ENCODE measurements at regions of chr12 and their contacts with region 1.

Region 1: GRCh38 chr12:43835656-43836474 is at the start of gene TMEM117:
- DNase-seq: peak; percentile 52
- ATAC-seq: peak; percentile 76
- H3K4me3 ChIP-seq: peak within 1 kb of the TSS; percentile 83
- H3K27ac ChIP-seq: peak within 1 kb of the TSS; percentile 41
- H3K4me1 ChIP-seq: peaks cover 8% of the 10 kb centered on the region; the same call in 1 of the 2 replicates
- H3K27me3 ChIP-seq: no peaks in the 10 kb centered on the region
- CTCF ChIP-seq: no peak
- total RNA-seq, gene TMEM117: 7.9 and 9.0 TPM in 2 replicates

Region 2: DNA sequence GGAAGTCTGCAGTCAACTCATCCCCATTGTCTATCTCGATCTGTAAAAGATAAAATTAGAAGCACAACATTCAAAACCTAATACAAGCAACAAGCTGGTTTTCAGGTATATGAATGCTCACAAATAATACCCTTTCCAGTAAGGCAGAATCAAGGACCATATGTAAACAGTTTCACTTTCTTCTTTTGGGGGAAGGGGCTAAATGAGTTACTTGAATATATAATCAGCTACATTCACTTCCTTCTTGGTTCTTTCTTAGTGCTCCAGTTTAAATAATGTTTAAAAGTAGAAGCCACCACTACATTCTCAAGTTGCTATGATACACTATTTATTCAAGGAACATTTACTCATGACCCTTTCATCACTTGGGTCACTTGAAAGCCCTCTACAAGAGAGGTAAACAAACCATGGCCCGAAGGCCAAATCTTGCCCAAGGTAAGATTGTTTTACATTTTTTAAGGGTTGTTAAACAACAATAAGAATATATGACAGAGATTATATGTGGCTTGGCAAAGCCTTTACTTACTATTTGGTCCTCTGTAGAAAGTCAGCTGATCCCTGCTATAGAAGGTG is 40.1 kb before region 1 on chr12:
- CTCF ChIA-PET with region 1: no interaction called
- POLR2A ChIA-PET with region 1: no interaction called
- intact Hi-C with region 1: loop called (anchors 5 kb)
- DNase-seq: peak; percentile 97
- ATAC-seq: peak; percentile 67
- H3K4me3 ChIP-seq: peak overlapping the region; percentile 8; the same call in 1 of the 2 replicates
- H3K27ac ChIP-seq: peak overlapping the region; percentile 86
- H3K4me1 ChIP-seq: peaks cover 50% of the 10 kb centered on the region
- H3K27me3 ChIP-seq: no peaks in the 10 kb centered on the region
- CTCF ChIP-seq: no peak

Region 3: DNA sequence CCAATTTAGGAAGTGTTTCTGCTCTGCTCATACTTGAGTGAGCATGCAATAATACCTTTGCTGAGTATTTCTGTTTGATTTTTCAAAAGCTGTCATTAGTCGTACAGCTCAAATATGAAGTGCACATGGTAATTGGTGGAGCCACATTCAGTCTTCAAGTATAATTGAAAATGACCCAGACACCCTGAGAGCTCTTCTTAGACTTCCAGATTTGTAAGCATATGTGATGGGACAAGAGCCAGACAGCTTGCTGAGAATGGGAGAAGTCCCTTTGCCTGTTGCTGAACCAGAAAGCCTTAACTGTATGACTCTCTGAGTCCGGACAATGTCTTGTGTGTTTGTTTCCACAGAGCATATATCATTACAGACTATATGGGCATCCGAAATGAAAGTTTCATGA is 307.3 kb after region 1 on chr12:
- CTCF ChIA-PET with region 1: no interaction called
- POLR2A ChIA-PET with region 1: no interaction called
- intact Hi-C with region 1: no loop called
- DNase-seq: no peak
- ATAC-seq: no peak
- H3K4me3 ChIP-seq: no peak overlapping the region
- H3K27ac ChIP-seq: no peak overlapping the region
- H3K4me1 ChIP-seq: no peaks in the 10 kb centered on the region
- H3K27me3 ChIP-seq: no peaks in the 10 kb centered on the region
- CTCF ChIP-seq: no peak

Measured in PC-3 (cell line).